ENCODE measurements at regions of chr15 and their contacts with region 1.

Region 1: DNA sequence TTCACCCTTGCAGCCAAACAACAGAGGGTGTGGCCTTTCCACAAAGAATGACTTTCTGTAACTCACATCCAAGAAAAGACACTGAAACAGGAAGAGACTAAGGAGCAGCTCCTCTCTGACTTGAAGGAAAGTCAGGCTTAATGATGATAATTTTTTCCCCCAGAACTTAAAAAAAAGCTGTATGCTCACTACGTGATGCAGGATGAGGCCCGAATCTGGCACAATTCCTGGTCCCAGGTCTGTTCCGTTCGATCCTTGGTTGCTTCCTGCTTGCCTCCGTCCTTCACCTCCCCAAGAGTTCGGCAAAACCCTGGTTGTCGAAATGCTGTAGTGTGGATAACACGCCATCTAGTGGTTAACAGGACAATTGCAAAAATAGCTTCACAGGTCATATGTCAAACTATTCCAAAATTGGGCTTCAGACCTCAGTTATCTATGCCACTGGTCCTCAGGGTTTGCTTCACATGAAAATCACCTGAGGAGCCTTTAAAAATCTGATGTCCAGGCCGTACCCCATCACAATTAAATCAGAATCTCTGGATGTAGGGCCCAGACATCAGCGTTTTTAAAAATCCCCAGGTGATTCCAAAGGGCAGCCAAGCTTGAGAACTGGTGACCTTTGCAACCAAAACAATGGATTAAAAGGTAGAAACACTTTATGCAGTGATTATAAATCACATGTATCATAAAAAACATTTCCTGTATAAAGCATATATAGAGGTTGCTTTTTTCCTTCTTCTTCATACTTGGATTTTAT is 28.1 kb upstream of the SYNM start:
- DNase-seq: peak; percentile 74
- ATAC-seq: peak; percentile 79
- H3K4me3 ChIP-seq: peak overlapping the region; percentile 30 to 69 (median 45)
- H3K4me3 Mint-ChIP-seq: peak overlapping the region; percentile 86
- H3K27ac ChIP-seq: no peak overlapping the region
- H3K27ac Mint-ChIP-seq: peak overlapping the region; percentile 46
- H3K4me1 ChIP-seq: peaks cover 5 to 7% of the 10 kb centered on the region in 2 donors
- H3K4me1 Mint-ChIP-seq: peaks cover 7% of the 10 kb centered on the region
- H3K27me3 ChIP-seq: peaks cover 0 to 4% (median under 1%) of the 10 kb centered on the region in 4 experiments
- H3K27me3 Mint-ChIP-seq: peaks cover 23% of the 10 kb centered on the region
- CTCF ChIP-seq: peak; percentile 93

Region 2: GRCh38 chr15:98442379-98442833 is 634.3 kb before region 1 on chr15:
- CTCF ChIA-PET with region 1: no interaction called
- POLR2A ChIA-PET with region 1: no interaction called
- intact Hi-C with region 1: loop called (anchors 2 kb)
- DNase-seq: peak; percentile 50
- ATAC-seq: peak; percentile 31
- H3K4me3 ChIP-seq: no peak overlapping the region
- H3K4me3 Mint-ChIP-seq: no peak overlapping the region
- H3K27ac ChIP-seq: no peak overlapping the region
- H3K27ac Mint-ChIP-seq: no peak overlapping the region
- H3K4me1 ChIP-seq: no peaks in the 10 kb centered on the region
- H3K4me1 Mint-ChIP-seq: peaks cover 4% of the 10 kb centered on the region
- H3K27me3 ChIP-seq: peaks cover 0 to 2% (median 0%) of the 10 kb centered on the region in 4 experiments
- H3K27me3 Mint-ChIP-seq: peaks cover 7% of the 10 kb centered on the region
- CTCF ChIP-seq: peak; percentile 74

Region 3: DNA sequence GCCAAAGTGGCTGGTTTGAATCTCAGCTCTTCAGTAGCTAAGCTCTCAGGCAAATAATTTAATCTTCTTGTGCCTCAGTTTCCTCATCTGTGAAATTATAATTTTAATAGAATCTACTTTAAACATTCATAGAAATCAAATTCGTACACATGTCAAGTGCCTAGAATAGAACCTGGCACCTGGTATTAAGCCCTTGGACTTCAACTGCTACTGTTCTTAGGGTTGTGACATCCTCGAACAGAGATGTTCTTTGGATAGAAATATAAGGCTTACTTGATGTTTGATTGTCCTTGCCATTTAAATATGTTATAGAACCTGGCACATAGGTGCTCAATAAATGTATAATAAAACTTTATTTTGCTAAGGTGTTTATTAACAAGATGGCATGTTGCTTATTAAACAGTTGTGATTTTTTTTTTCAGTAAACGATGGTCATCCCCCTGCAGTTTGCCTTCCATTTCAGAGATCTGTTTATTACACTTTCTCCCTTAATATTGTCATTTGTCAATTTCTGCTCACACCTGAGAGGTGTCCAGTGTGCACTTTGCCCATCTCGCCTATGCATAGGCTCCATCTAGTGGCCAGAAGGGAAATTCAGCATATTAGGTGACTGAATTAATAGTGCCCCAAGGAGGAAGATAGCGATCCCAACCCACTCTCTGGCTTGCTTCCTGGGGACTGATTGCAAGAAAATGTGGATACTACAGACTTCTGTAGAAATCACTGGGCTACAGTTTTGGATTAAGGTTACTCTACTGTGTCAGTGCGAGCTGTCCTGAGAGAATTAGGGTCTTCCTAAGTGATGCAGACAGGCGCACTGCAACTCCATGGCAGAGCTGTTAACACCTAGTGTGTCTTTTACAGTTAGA is 417.7 kb before region 1 on chr15:
- CTCF ChIA-PET with region 1: no interaction called
- POLR2A ChIA-PET with region 1: no interaction called
- intact Hi-C with region 1: loop called (anchors 10 kb)
- DNase-seq: peak; percentile 70
- ATAC-seq: peak; percentile 58
- H3K4me3 ChIP-seq: no peak overlapping the region
- H3K4me3 Mint-ChIP-seq: no peak overlapping the region
- H3K27ac ChIP-seq: no peak overlapping the region
- H3K27ac Mint-ChIP-seq: no peak overlapping the region
- H3K4me1 ChIP-seq: no peaks in the 10 kb centered on the region
- H3K4me1 Mint-ChIP-seq: no peaks in the 10 kb centered on the region
- H3K27me3 ChIP-seq: no peaks in the 10 kb centered on the region
- H3K27me3 Mint-ChIP-seq: peaks cover 31% of the 10 kb centered on the region
- CTCF ChIP-seq: peak; percentile 97

Region 4: GRCh38 chr15:99059010-99059981 is 17.4 kb before region 1 on chr15:
- CTCF ChIA-PET with region 1: interaction called, 15 read pairs
- POLR2A ChIA-PET with region 1: no interaction called
- intact Hi-C with region 1: no loop called
- DNase-seq: peak; percentile 64
- ATAC-seq: peak; percentile 79
- H3K4me3 ChIP-seq: peak overlapping the region in 4 of 5 experiments; percentile 26 to 56 (median 49)
- H3K4me3 Mint-ChIP-seq: peak overlapping the region; percentile 79
- H3K27ac ChIP-seq: no peak overlapping the region
- H3K27ac Mint-ChIP-seq: peak overlapping the region; percentile 32
- H3K4me1 ChIP-seq: peaks cover 12 to 20% of the 10 kb centered on the region in 2 donors
- H3K4me1 Mint-ChIP-seq: peaks cover 18% of the 10 kb centered on the region
- H3K27me3 ChIP-seq: peaks cover 0 to 41% (median 19%) of the 10 kb centered on the region in 4 experiments
- H3K27me3 Mint-ChIP-seq: peaks cover 55% of the 10 kb centered on the region
- CTCF ChIP-seq: peak; percentile 72

Region 5: DNA sequence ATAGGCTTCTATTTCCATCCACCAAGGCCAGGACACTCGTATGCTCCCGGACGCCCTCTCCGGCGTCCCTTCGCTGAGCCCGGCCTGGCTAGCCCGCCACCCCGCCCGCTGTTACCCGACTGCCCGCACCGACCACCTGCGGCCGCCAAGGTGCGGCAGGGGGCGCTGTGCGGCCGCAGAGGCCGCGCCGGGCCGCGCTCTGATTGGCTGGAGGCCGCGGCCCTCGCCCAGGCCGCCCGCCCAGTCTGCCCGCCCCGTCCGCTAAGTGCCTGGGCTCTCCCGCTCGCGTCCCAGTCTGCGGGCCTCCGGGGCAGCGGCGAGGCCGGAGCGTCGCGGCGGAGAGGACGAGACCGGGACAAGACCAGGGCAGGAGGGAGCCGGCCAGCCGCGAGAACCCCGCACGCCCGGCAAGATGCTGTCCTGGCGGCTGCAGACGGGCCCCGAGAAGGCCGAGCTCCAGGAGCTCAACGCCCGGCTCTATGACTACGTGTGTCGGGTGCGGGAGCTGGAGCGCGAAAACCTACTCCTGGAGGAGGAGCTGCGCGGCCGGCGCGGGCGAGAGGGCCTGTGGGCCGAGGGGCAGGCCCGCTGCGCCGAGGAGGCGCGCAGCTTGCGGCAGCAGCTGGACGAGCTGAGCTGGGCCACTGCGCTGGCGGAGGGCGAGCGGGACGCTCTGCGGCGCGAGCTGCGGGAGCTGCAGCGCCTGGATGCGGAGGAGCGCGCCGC is 28.2 kb after region 1 on chr15 and contains the start of gene SYNM:
- CTCF ChIA-PET with region 1: interaction called, 10 read pairs
- POLR2A ChIA-PET with region 1: no interaction called
- intact Hi-C with region 1: no loop called
- DNase-seq: peak; percentile 55
- ATAC-seq: peak; percentile 73
- H3K4me3 ChIP-seq: peak within 1 kb of the TSS in 2 of 5 experiments; percentile 36 to 40
- H3K4me3 Mint-ChIP-seq: peak within 1 kb of the TSS; percentile 70
- H3K27ac ChIP-seq: no peak within 1 kb of the TSS
- H3K27ac Mint-ChIP-seq: no peak within 1 kb of the TSS
- H3K4me1 ChIP-seq: peaks cover 12 to 14% of the 10 kb centered on the region in 2 donors
- H3K4me1 Mint-ChIP-seq: peaks cover 18% of the 10 kb centered on the region
- H3K27me3 ChIP-seq: peaks cover 0 to 44% (median 22%) of the 10 kb centered on the region in 4 experiments
- H3K27me3 Mint-ChIP-seq: peaks cover 50% of the 10 kb centered on the region
- CTCF ChIP-seq: peak; percentile 48
- total RNA-seq, gene SYNM: 0.27 and 0.36 TPM in 2 replicates

Region 6: GRCh38 chr15:99207672-99208071 is 130.9 kb after region 1 on chr15:
- CTCF ChIA-PET with region 1: no interaction called
- POLR2A ChIA-PET with region 1: no interaction called
- intact Hi-C with region 1: no loop called
- DNase-seq: no peak
- ATAC-seq: no peak
- H3K4me3 ChIP-seq: no peak overlapping the region
- H3K4me3 Mint-ChIP-seq: no peak overlapping the region
- H3K27ac ChIP-seq: no peak overlapping the region
- H3K27ac Mint-ChIP-seq: no peak overlapping the region
- H3K4me1 ChIP-seq: no peaks in the 10 kb centered on the region
- H3K4me1 Mint-ChIP-seq: no peaks in the 10 kb centered on the region
- H3K27me3 ChIP-seq: no peaks in the 10 kb centered on the region
- H3K27me3 Mint-ChIP-seq: no peaks in the 10 kb centered on the region
- CTCF ChIP-seq: no peak

Measured in B cell (primary cell).